ENCODE measurements at regions of chr2 and their contacts with region 1.

Region 1: GRCh38 chr2:174634130-174635014 is 36.8 kb upstream of the WIPF1 start:
- DNase-seq: peak; percentile 69
- ATAC-seq: peak; percentile 70
- H3K4me3 Mint-ChIP-seq: peak overlapping the region; percentile 92
- H3K27ac Mint-ChIP-seq: peak overlapping the region; percentile 98
- H3K4me1 Mint-ChIP-seq: peaks cover 56% of the 10 kb centered on the region
- H3K27me3 Mint-ChIP-seq: no peaks in the 10 kb centered on the region

Region 2: DNA sequence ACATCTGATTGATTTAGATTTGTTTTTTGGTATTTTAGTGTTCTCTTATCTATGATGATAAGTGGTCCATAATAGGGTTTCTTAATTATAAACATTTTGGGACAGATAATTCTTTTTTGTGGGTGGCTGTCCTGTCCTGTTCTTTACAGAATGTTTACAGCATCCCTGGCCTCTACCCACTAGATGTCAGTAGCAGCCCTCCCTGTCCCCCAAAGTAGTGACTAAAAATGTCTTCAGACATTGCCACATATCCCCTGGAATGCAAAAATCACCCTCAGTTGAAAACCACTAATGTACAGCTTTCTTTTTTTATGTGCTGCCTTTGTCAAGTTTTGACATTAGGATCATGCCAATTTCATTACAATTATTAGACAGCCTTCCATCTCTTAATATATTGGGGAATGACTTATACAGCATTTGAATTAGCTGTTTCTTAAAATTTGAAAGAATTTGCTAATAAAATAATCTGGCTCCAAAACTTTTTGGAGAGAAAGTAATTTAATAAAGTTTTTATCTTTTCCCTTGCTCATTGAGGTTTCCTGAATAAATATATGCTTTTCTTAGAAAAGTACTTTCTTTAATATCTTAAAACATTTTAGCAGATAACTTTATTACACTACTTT is 56.3 kb before region 1 on chr2:
- CTCF ChIA-PET with region 1: interaction called, 9 read pairs
- POLR2A ChIA-PET with region 1: interaction called, 3 read pairs
- intact Hi-C with region 1: loop called in 1 of 2 experiments (anchors 2 kb)
- DNase-seq: peak; percentile 68
- ATAC-seq: peak; percentile 74
- H3K4me3 Mint-ChIP-seq: no peak overlapping the region
- H3K27ac Mint-ChIP-seq: peak overlapping the region; percentile 31
- H3K4me1 Mint-ChIP-seq: peaks cover 72% of the 10 kb centered on the region
- H3K27me3 Mint-ChIP-seq: no peaks in the 10 kb centered on the region

Region 3: DNA sequence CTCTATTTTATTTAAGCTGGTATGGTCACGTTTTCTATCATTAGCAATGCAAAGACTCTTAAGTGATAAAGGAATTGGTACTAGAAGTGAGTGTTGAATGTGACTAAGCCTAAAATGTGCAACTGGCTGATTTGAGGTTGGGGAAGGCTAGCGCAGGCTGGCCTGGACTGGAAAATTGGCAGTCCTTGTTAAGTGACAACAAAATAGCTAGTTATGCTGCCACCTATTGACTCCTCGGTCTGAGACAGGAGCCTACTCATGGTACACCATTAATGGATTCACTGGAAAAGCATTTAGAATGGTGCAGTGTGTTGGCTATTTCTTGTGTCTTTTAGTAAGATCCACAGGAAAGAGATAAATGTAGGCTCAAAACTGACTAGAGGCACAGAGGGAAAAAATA is 31.1 kb before region 1 on chr2:
- CTCF ChIA-PET with region 1: interaction called, 11 read pairs
- POLR2A ChIA-PET with region 1: no interaction called
- intact Hi-C with region 1: loop called (anchors 1 kb)
- DNase-seq: peak; percentile 78
- ATAC-seq: peak; percentile 63
- H3K4me3 Mint-ChIP-seq: no peak overlapping the region
- H3K27ac Mint-ChIP-seq: peak overlapping the region; percentile 84
- H3K4me1 Mint-ChIP-seq: peaks cover 91% of the 10 kb centered on the region
- H3K27me3 Mint-ChIP-seq: no peaks in the 10 kb centered on the region

Region 4: GRCh38 chr2:174623690-174624089 is 10.7 kb before region 1 on chr2:
- CTCF ChIA-PET with region 1: interaction called, 5 read pairs
- POLR2A ChIA-PET with region 1: interaction called, 13 read pairs
- intact Hi-C with region 1: no loop called
- DNase-seq: no peak
- ATAC-seq: no peak
- H3K4me3 Mint-ChIP-seq: no peak overlapping the region
- H3K27ac Mint-ChIP-seq: peak overlapping the region; percentile 39
- H3K4me1 Mint-ChIP-seq: peaks cover 66% of the 10 kb centered on the region
- H3K27me3 Mint-ChIP-seq: no peaks in the 10 kb centered on the region

Region 5: GRCh38 chr2:174688079-174688478 is 53.7 kb after region 1 on chr2:
- CTCF ChIA-PET with region 1: interaction called, 50 read pairs
- POLR2A ChIA-PET with region 1: no interaction called
- intact Hi-C with region 1: loop called in 1 of 2 experiments (anchors 2 kb)
- DNase-seq: no peak
- ATAC-seq: peak; percentile 70
- H3K4me3 Mint-ChIP-seq: no peak overlapping the region
- H3K27ac Mint-ChIP-seq: no peak overlapping the region
- H3K4me1 Mint-ChIP-seq: peaks cover 19% of the 10 kb centered on the region
- H3K27me3 Mint-ChIP-seq: no peaks in the 10 kb centered on the region

Measured in activated CD4-positive, alpha-beta T cell treated with anti-CD3 and anti-CD28 coated beads for 36 hours (primary cell).